Right cardiac atrium (tissue), 5 donors: ENCODE measurements at regions of chr1 and their contacts with region 1.

Region 1: GRCh38 chr1:92754000-92754718 is 30.7 kb downstream of the EVI5 start:
- DNase-seq: no peak
- ATAC-seq: no peak
- H3K4me3 ChIP-seq: no peak overlapping the region
- H3K27ac ChIP-seq: peak overlapping the region; percentile 12
- H3K4me1 ChIP-seq: peaks cover 7% of the 10 kb centered on the region
- H3K27me3 ChIP-seq: no peaks in the 10 kb centered on the region

Region 2: DNA sequence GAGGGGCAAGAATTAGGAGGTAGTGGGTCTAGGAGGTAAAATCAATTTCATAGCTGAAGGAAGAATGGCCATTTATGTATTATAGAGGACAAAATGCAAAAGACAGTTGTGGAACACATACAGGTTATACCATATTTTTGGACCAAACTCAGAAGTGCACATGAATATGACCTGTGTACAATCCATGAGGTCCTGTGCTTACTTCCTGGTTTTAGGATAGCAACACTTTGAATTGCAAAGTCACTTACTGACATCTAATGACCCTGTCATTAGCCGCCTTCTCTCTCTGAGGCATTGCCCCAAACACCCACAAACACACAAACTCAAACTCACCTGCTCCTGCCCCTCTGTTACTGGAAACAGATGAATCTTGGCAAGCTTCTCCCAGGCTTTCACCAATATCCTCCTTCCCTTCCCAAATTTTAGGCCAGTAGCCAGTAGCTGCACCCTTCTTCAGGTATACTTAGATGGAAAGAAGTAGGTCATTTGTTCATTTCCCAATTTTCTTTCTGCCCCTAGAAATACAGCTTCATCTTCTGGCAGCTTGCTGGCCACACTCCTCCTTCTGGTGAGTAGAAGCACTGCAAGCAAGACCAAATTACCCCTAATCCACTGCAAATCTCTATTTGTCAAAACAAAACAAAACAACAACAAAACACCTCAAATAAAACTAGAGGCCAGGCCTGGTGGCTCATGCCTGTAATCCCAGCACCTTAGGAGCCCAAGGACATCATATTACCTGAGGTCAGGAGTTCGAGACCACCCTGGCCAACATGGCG is 64.0 kb after region 1 on chr1:
- intact Hi-C with region 1: loop called in 2 of 4 experiments (anchors 5 to 10 kb)
- DNase-seq: no peak
- ATAC-seq: peak in 1 of 2 donors; percentile 37
- H3K4me3 ChIP-seq: no peak overlapping the region
- H3K27ac ChIP-seq: no peak overlapping the region
- H3K4me1 ChIP-seq: no peaks in the 10 kb centered on the region
- H3K27me3 ChIP-seq: no peaks in the 10 kb centered on the region

Region 3: GRCh38 chr1:93345633-93346420 is 591.7 kb after region 1 on chr1 and contains the start of gene DR1:
- intact Hi-C with region 1: no loop called
- DNase-seq: peak; percentile 97 to 99 (median 98)
- ATAC-seq: peak; percentile 99
- H3K4me3 ChIP-seq: peak within 1 kb of the TSS; percentile 99
- H3K27ac ChIP-seq: peak within 1 kb of the TSS; percentile 98
- H3K4me1 ChIP-seq: no peaks in the 10 kb centered on the region
- H3K27me3 ChIP-seq: no peaks in the 10 kb centered on the region
- total RNA-seq, gene DR1: 39.3 to 42.6 (median 40.9) TPM